Right ventricle myocardium inferior (tissue), 1 donor: ENCODE measurements at regions of chr10 and their contacts with region 1.

Region 1: GRCh38 chr10:4663162-4663904 is 162.7 kb upstream of the AKR1E2 start:
- DNase-seq: no peak
- ATAC-seq: peak; percentile 88

Region 2: DNA sequence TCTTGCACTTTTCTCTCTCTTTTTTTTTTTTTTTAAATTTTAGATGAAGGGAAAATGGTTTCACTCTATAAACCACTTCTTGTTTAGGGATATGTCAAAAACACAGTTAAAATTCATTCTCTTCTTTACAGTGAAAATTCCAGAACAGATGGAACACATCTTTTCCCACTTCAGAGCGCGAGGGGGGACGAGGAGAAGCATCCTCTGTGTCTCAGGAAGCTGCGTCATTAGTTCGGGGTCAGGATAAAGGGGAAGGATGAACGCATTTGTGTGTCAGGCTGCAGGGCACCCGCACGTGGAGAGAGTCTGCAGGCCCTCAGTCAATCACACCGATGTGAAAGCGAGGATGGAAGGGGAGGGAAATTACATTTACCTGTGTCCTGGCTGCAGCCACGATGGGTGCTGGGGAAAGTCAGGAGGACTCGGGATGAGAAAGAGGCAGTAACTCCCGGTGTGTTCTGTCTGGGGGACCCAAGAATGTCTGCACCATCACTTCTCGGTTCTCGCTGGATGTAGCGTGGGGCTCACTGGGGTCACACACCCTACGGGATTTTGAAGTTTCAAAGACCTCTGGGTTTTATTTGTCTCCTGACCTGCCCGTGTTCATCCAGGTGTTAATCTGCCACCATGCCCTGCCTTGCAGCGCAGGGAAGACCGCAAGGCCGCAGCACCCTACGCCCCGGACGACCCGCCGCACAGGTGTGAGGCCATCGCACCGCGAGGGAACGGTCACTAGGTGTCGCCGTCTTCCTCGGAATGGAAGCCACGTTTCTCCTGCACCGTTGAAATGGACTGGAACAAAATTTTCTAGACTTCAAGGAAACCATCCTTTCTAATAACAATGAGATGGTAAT is 1424.0 kb before region 1 on chr10:
- intact Hi-C with region 1: loop called (anchors 10 kb)
- DNase-seq: peak; percentile 89
- ATAC-seq: peak; percentile 77

Region 3: DNA sequence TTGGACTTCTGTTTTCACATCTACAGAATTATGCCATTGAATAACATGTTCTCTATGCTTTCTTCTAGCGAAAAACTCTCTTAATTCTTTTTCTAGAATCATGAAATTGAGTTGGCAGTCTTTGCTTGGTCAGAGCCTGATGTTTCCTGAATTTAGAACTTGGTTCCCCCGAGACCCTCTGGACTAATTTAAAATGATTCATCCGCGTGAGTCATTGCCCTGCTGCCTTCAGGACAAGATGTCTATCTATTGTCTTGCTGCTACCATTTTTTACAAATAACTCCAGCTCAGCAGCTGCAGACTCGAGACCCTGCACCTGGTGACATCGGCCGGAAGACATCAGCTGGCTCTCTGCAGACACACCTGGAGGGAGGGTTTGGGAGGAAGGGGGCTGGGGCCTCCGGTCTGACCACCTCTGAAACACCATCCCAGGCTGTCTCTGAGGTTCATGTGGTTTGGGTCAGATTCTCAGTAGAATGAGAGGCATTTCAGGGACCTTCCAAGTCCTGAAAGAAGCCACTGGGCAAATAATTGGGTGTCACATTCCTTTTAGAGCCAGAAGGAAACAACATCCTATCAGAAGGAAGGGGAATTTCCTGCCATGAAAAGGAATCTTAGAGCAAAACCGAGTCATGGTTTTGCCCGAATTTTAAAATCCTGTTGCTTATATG is 857.4 kb before region 1 on chr10:
- intact Hi-C with region 1: loop called (anchors 2 kb)
- DNase-seq: no peak
- ATAC-seq: peak; percentile 31

Region 4: GRCh38 chr10:4081685-4082111 is 581.6 kb before region 1 on chr10:
- intact Hi-C with region 1: loop called (anchors 2 kb)
- DNase-seq: no peak
- ATAC-seq: peak; percentile 71

Region 5: DNA sequence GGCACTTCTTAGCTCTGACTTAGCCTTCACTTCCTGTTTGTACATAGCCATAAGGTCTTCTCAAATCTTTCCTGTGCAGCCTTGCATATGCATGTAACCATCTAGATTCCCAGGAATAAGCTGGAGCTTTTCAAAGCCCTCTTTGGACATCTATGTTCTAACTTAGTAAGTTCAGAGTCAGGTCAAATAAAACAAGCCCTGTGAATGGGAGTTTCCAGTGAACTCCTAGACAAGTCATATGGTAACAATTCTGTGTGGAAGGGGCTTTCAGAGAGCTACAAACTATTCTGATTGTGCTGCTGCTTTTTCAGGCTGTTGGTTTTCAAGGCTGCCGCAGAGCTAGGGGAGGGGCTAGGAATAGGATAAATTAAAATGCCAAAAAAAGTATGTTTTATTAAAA is 45.7 kb before region 1 on chr10:
- intact Hi-C with region 1: no loop called
- DNase-seq: no peak
- ATAC-seq: no peak

Region 6: GRCh38 chr10:4685904-4686643 is 22.7 kb after region 1 on chr10:
- intact Hi-C with region 1: loop called (anchors 1 kb)
- DNase-seq: no peak
- ATAC-seq: no peak

Region 7: GRCh38 chr10:4767033-4767814 is 103.9 kb after region 1 on chr10:
- intact Hi-C with region 1: loop called (anchors 2 kb)
- DNase-seq: no peak
- ATAC-seq: peak; percentile 61